ENCODE measurements at regions of chr3 and their contacts with region 1.

Region 1: GRCh38 chr3:52056968-52057805 is 816 bp upstream of the DUSP7 start:
- DNase-seq: peak; percentile 99
- H3K4me3 Mint-ChIP-seq: peak overlapping the region; percentile 81
- H3K27ac Mint-ChIP-seq: peak overlapping the region; percentile 50
- H3K4me1 Mint-ChIP-seq: peaks cover 42% of the 10 kb centered on the region
- H3K27me3 Mint-ChIP-seq: no peaks in the 10 kb centered on the region
- CTCF ChIP-seq: no peak

Region 2: GRCh38 chr3:51995346-51996163 is 61.6 kb before region 1 on chr3 and contains the start of gene RPL29:
- CTCF ChIA-PET with region 1: interaction called, 116 read pairs
- POLR2A ChIA-PET with region 1: interaction called, 34 read pairs
- intact Hi-C with region 1: no loop called
- DNase-seq: peak; percentile 94
- H3K4me3 Mint-ChIP-seq: peak within 1 kb of the TSS; percentile 96
- H3K27ac Mint-ChIP-seq: peak within 1 kb of the TSS; percentile 100
- H3K4me1 Mint-ChIP-seq: peaks cover 8% of the 10 kb centered on the region
- H3K27me3 Mint-ChIP-seq: no peaks in the 10 kb centered on the region
- CTCF ChIP-seq: no peak
- total RNA-seq, gene RPL29: 1,551 and 1,602 TPM in 2 replicates

Region 3: DNA sequence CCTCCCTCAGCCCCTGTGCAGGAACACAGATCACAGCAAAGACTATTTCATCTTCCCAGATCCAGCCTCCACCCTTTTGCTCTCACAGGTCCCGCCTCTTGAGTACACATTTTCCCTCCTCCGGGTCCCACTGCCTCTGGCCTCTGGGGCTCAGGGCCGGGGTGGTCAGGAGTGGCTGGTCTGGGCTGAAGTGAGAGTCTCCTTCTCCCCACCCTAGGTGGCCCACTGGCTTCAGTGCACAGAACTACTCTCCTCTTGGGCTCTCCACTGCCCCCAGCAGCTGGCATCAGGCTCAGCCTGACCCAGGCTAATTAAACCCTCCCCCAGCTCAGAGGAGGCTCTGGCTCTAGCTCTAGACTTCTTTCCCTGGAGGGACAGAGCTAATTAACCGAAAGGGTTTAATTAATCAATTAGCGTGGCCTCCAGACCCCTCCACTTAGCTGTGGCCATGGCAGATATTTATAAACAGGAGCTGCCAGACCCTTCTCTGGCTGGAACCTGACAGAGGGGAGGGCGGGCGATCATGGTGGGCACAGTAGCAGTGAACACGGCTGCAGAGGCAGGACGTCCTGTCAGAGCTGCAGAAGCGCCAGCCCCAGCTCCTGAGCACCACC is 16.0 kb before region 1 on chr3:
- CTCF ChIA-PET with region 1: interaction called, 32 read pairs
- POLR2A ChIA-PET with region 1: interaction called, 101 read pairs
- intact Hi-C with region 1: no loop called
- DNase-seq: no peak
- H3K4me3 Mint-ChIP-seq: no peak overlapping the region
- H3K27ac Mint-ChIP-seq: no peak overlapping the region
- H3K4me1 Mint-ChIP-seq: peaks cover 45% of the 10 kb centered on the region
- H3K27me3 Mint-ChIP-seq: no peaks in the 10 kb centered on the region
- CTCF ChIP-seq: no peak

Region 4: GRCh38 chr3:52076896-52077780 is 20.0 kb after region 1 on chr3:
- CTCF ChIA-PET with region 1: no interaction called
- POLR2A ChIA-PET with region 1: no interaction called
- intact Hi-C with region 1: no loop called
- DNase-seq: no peak
- H3K4me3 Mint-ChIP-seq: no peak overlapping the region
- H3K27ac Mint-ChIP-seq: no peak overlapping the region
- H3K4me1 Mint-ChIP-seq: no peaks in the 10 kb centered on the region
- H3K27me3 Mint-ChIP-seq: no peaks in the 10 kb centered on the region
- CTCF ChIP-seq: no peak

Region 5: DNA sequence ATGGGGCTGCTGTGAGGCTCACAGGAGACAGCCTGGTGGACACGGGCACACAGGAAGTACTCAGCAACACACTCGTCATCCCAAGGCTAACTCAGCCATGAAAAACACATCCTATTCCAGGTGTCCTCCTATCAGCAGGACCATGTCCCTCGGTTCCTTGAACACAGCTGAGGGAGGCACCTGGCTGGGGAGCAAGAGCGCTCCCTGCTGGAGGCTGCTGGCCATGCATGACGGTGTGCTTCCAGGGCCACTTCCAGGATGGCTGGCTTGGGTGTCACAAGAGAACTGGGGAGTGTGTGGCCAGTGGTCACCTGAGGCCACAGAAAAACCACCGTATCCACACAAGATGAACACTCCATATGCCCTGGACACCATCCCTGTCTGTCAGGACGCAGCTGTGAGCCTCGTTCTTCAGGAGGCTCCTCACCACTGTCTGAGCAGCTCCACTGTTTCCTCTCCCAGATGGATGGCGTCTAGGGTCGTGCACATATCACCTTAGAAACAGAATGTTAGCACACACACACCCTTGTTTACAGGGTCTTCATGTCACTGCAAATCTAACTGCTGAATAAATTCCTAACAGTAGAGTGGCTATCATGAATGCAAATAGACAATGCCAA is 66.0 kb after region 1 on chr3:
- CTCF ChIA-PET with region 1: interaction called, 103 read pairs
- POLR2A ChIA-PET with region 1: interaction called, 45 read pairs
- intact Hi-C with region 1: loop called (anchors 1 kb)
- DNase-seq: peak; percentile 75
- H3K4me3 Mint-ChIP-seq: no peak overlapping the region
- H3K27ac Mint-ChIP-seq: peak overlapping the region; percentile 49
- H3K4me1 Mint-ChIP-seq: peaks cover 18% of the 10 kb centered on the region
- H3K27me3 Mint-ChIP-seq: no peaks in the 10 kb centered on the region
- CTCF ChIP-seq: peak; percentile 94

Region 6: DNA sequence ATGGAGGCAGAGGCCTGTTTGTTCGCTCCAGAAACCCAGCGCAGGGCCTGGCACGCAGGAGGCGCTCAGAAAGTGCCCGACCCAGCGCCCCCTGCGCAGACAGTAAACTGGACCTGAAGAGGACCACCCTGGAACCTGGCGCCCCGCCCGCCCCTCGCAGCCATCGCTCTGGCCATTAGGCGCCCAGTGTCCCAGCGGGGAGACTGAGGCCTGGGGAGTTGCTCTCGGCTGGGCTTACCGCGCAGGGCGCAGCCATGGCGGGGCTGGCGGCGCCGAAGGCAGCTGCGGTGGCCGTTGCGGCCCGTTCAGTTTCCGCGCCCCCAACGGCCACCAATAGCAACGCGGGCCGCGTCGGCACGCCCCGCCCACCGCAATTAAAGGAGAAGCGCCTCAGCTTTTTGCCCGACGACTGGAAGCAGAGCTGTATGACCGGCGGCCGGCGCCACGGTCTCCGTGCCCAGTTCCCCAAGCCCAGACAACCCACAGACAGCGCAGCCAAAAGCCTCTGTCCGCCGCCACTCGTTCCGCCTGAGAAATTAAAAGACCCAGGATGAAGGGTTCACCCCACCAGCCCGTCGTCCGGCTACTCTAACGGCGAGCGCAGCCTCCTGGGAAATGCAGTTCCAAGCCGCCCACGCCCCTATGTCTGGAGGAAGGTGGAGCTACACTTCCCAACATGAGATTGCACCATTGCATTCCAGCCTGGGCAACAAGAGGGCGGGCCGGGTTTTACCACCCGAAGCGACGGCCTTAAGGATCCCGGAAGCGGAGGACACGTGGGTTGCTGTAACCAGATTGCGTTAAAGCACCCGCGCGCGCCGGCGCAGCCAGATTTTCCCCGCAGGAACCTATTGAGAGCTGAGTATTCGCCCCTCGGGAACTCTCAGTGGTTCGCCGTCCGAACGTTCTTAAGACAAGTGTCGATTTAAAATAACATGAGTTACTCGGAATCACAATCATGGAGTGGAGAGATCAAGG is 97.2 kb after region 1 on chr3 and contains the start of gene POC1A:
- CTCF ChIA-PET with region 1: interaction called, 5 read pairs
- POLR2A ChIA-PET with region 1: interaction called, 14 read pairs
- intact Hi-C with region 1: no loop called
- DNase-seq: peak; percentile 99
- H3K4me3 Mint-ChIP-seq: peak within 1 kb of the TSS; percentile 93
- H3K27ac Mint-ChIP-seq: peak within 1 kb of the TSS; percentile 96
- H3K4me1 Mint-ChIP-seq: peaks cover 10% of the 10 kb centered on the region
- H3K27me3 Mint-ChIP-seq: no peaks in the 10 kb centered on the region
- CTCF ChIP-seq: no peak
- total RNA-seq, gene POC1A: 7.5 and 9.8 TPM in 2 replicates